ENCODE measurements at regions of chr11 and their contacts with region 1.

Region 1: DNA sequence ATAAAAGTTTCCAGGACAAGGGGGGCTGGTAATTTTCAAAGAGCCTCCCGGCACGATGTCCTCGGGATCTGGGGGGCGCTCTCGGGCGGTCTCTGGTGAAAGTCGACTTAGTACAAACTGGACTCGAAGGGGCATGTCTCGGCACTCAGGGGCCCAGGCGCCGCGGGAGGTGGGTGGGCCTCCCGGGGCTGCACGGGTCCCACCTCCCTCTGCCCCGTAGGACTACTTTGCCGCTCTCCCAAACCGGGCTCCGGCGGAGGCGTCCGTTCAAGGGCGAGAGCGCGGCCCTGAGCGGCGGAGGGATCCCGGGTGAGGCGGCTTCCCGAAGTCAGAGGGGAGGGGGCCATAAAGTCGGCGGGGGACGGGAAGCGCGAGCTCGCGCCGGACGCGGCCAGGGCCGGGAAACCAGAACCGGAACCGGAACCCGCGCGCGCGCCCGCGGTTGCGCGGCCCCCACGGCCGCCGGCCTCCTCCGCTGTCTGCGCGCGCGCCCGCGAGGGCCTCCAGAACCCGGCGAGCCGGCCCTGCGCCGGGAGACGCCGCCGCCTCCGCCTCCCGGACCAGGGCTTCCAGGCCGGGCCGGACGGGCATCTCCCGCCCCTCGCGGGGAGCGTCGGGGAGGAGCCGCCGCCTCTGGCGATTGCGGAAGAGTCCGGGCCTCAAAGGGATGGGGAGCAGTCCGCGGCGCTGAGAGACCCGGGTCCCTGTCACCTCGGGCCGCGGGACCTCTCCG is at the start of gene ARHGEF12:
- DNase-seq: peak; percentile 70
- H3K4me3 Mint-ChIP-seq: peak within 1 kb of the TSS; percentile 96
- H3K27ac Mint-ChIP-seq: peak within 1 kb of the TSS; percentile 83
- H3K4me1 Mint-ChIP-seq: peaks cover 40% of the 10 kb centered on the region
- H3K27me3 Mint-ChIP-seq: peaks cover 45% of the 10 kb centered on the region
- total RNA-seq, gene ARHGEF12: 25.7 and 26.0 TPM in 2 replicates

Region 2: DNA sequence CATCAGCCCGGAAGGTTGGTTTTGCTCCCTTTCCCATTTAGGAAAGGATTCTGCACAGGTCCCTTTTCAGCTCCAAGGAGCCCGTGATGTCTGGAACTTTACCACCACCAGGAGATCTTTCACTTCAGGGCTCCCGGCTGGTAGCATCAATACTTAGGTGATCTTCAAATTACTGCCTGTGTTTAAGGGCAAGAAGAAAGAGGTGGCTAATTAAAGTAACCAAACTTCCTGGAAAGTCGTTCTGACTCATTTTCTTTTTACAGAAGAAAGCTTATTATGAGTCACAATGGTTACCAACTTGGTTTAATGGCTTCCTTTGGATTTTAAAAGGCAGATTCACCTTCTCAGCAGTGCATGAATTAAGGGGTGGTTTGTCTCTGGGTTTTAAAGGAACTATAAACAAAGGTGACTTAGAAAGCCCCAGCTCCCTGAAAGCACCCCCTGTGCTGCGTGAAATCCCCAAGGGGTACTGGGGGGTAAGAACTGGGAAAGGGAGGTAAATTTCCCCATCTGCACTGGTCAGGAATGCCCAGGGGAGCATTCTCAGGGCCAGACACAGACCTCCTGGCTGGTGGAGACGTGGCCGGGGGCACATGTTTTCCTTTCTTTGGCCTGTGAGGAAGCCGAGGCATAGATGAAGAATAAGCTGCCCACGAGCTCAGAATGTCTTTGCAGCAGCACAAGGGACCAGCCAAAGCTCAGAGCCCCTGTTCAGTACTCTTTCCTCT is 87.4 kb before region 1 on chr11:
- intact Hi-C with region 1: loop called (anchors 2 kb)
- DNase-seq: peak; percentile 25
- H3K4me3 Mint-ChIP-seq: peak overlapping the region; percentile 69
- H3K27ac Mint-ChIP-seq: peak overlapping the region; percentile 84
- H3K4me1 Mint-ChIP-seq: peaks cover 65% of the 10 kb centered on the region
- H3K27me3 Mint-ChIP-seq: peaks cover 48% of the 10 kb centered on the region

Region 3: GRCh38 chr11:120391292-120391691 is 55.2 kb after region 1 on chr11:
- intact Hi-C with region 1: no loop called
- DNase-seq: no peak
- H3K4me3 Mint-ChIP-seq: no peak overlapping the region
- H3K27ac Mint-ChIP-seq: no peak overlapping the region
- H3K4me1 Mint-ChIP-seq: no peaks in the 10 kb centered on the region
- H3K27me3 Mint-ChIP-seq: peaks cover 23% of the 10 kb centered on the region

Region 4: DNA sequence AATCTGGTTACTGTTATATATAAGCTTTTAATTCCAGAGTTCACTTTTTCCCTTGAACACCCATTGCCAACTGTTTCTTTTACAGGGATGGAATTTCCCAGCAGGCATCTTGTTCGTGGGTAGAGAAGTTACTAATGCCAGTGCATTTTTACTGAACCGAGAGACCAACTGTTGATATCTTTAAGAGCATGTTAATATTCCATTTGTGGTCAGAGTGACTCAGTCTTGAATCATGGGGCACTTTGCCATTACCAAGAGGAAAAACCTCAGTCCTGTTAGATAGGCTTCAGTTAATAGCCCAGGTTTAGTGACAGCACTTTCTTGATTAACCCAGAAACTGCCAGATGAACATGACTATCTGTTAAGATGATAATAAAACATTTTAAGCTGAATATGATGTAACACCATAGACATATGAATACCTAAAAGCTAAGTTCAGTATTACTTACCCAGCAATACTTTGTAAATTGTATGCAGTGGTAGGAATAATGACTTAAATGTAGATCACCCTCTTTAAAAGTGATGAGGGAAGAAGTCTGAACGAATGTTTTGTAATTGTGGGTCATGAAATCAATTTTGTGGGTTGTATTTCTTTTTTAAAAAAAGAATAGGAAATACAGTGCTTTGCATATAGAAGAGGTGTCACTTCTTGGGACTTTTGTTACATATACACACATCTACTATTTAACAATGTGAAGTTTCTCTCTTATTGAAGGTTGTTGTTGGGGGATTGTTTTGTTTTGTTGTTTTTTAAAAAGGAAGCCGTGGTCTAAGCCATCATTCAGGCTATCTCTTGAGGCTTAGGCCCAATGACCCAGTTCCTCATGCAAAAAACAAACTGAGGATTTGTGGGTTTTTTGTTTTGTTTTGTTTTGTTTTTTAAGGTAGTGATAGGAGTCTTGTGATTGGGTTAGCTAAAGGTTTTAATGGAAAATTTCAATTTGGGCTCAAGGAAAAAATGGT is 96.3 kb after region 1 on chr11:
- intact Hi-C with region 1: loop called (anchors 2 kb)
- DNase-seq: no peak
- H3K4me3 Mint-ChIP-seq: peak overlapping the region; percentile 1
- H3K27ac Mint-ChIP-seq: peak overlapping the region; percentile 49
- H3K4me1 Mint-ChIP-seq: peaks cover 18% of the 10 kb centered on the region
- H3K27me3 Mint-ChIP-seq: no peaks in the 10 kb centered on the region

Region 5: GRCh38 chr11:120952461-120953434 is 616.7 kb after region 1 on chr11:
- intact Hi-C with region 1: loop called (anchors 10 kb)
- DNase-seq: peak; percentile 25
- H3K4me3 Mint-ChIP-seq: no peak overlapping the region
- H3K27ac Mint-ChIP-seq: no peak overlapping the region
- H3K4me1 Mint-ChIP-seq: peaks cover 7% of the 10 kb centered on the region
- H3K27me3 Mint-ChIP-seq: no peaks in the 10 kb centered on the region

Region 6: DNA sequence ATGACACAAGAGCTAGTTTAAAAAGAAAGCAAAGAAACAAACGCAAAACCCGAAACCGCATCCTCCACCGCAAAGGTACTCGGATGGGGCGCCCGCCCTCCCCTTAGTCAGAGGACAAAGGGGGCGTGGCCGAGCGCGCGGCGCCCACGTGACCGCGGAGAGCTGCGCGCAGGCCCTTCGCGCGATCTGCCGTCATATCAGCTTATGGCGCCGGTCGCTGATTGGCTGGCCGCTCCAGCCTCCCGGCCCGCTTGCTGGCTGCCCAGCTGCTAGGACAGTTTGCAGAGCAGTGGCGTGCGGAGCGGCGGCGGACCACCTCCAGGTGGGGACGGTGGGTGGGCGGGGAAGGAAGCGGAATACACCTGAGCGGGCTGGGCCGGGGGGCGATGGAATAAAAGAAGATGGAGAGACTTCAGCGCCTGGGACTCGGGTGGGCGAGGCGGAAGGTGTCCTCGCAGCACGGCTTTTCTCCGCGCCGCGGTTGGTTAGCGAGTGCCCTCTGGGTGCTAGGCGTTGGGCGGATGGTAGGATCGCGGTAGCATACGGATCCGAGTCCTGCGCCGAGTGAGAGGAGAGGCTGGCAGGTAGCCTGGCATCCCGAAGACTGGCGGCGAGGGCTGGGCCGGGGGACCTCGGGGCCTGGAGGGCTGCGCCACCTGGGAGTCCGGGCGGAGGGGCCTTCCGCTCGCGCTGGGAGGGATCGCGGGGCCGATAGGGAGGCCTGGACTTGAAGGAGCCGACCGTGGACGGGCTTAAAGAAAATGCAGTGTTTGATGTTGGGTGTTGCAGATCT is 956.6 kb after region 1 on chr11 and contains the start of gene SC5D:
- intact Hi-C with region 1: loop called (anchors 5 kb)
- DNase-seq: peak; percentile 94
- H3K4me3 Mint-ChIP-seq: peak within 1 kb of the TSS; percentile 93
- H3K27ac Mint-ChIP-seq: peak within 1 kb of the TSS; percentile 97
- H3K4me1 Mint-ChIP-seq: peaks cover 53% of the 10 kb centered on the region
- H3K27me3 Mint-ChIP-seq: peaks cover 10% of the 10 kb centered on the region
- total RNA-seq, gene SC5D: 21.9 and 26.3 TPM in 2 replicates

Region 7: GRCh38 chr11:121508449-121508848 is 1172.4 kb after region 1 on chr11:
- intact Hi-C with region 1: no loop called
- DNase-seq: no peak
- H3K4me3 Mint-ChIP-seq: no peak overlapping the region
- H3K27ac Mint-ChIP-seq: no peak overlapping the region
- H3K4me1 Mint-ChIP-seq: peaks cover 18% of the 10 kb centered on the region
- H3K27me3 Mint-ChIP-seq: no peaks in the 10 kb centered on the region